CD8-positive, alpha-beta T cell (primary cell): ENCODE measurements at regions of chr4 and their contacts with region 1.

Region 1: DNA sequence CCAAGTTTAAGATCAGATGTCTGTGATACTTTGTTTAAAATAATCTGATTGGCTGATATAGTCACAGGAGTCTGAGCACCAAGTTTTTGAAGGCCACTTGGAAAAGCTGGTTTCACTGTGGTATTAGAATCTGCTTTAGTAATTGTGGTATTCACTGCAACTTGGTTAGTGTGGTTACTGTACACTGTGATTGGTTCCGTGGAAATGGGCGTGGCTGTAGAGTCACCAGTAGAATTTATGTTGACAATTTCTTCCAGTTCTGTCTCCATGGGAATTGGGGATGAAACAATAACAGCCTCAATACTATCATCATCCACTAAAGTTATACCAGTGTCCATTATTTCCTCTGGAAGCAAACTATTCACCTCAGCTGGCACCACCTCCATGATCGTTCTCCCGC is 26.2 kb downstream of the LIN54 start:
- DNase-seq: no peak
- ATAC-seq: no peak
- H3K4me3 ChIP-seq: no peak overlapping the region
- H3K4me3 Mint-ChIP-seq: no peak overlapping the region
- H3K27ac ChIP-seq: no peak overlapping the region
- H3K27ac Mint-ChIP-seq: no peak overlapping the region
- H3K4me1 ChIP-seq: peaks cover 5% of the 10 kb centered on the region
- H3K4me1 Mint-ChIP-seq: peaks cover 15% of the 10 kb centered on the region
- H3K27me3 ChIP-seq: no peaks in the 10 kb centered on the region
- H3K27me3 Mint-ChIP-seq: no peaks in the 10 kb centered on the region
- CTCF ChIP-seq: no peak

Region 2: GRCh38 chr4:81631958-81632441 is 1352.5 kb before region 1 on chr4:
- CTCF ChIA-PET with region 1: no interaction called
- POLR2A ChIA-PET with region 1: no interaction called
- intact Hi-C with region 1: no loop called
- DNase-seq: no peak
- ATAC-seq: no peak
- H3K4me3 ChIP-seq: no peak overlapping the region
- H3K4me3 Mint-ChIP-seq: no peak overlapping the region
- H3K27ac ChIP-seq: no peak overlapping the region
- H3K27ac Mint-ChIP-seq: no peak overlapping the region
- H3K4me1 ChIP-seq: no peaks in the 10 kb centered on the region
- H3K4me1 Mint-ChIP-seq: no peaks in the 10 kb centered on the region
- H3K27me3 ChIP-seq: no peaks in the 10 kb centered on the region
- H3K27me3 Mint-ChIP-seq: no peaks in the 10 kb centered on the region
- CTCF ChIP-seq: no peak

Region 3: GRCh38 chr4:82667761-82668505 is 316.5 kb before region 1 on chr4:
- CTCF ChIA-PET with region 1: no interaction called
- POLR2A ChIA-PET with region 1: no interaction called
- intact Hi-C with region 1: no loop called
- DNase-seq: no peak
- ATAC-seq: no peak
- H3K4me3 ChIP-seq: no peak overlapping the region
- H3K4me3 Mint-ChIP-seq: no peak overlapping the region
- H3K27ac ChIP-seq: no peak overlapping the region
- H3K27ac Mint-ChIP-seq: no peak overlapping the region
- H3K4me1 ChIP-seq: no peaks in the 10 kb centered on the region
- H3K4me1 Mint-ChIP-seq: no peaks in the 10 kb centered on the region
- H3K27me3 ChIP-seq: no peaks in the 10 kb centered on the region
- H3K27me3 Mint-ChIP-seq: peaks cover 7% of the 10 kb centered on the region
- CTCF ChIP-seq: no peak

Region 4: DNA sequence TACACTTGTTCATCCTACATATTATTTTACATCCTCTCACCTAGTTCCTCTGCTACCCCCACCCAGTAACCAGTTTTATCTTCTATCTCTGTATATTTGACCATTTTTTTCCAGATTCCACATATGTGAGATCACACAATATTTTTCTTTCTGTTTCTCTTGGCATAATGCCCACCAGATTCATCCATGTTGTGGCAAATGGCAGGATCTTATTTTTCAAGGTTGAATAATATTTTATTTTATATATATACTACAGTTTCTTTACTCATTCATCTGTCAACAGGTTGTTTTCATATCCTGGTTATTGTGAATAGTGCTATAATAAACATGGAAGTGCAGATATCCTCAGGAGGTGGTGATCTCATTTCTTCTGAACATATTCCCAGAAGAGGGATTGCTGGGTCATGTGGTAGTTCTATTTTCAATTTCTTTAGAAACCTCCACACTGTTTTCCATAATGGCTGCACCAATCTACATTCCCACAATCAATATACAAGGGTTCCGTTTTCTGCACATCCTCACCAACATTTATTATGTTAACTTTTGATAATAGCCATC is 35.7 kb before region 1 on chr4:
- CTCF ChIA-PET with region 1: no interaction called
- POLR2A ChIA-PET with region 1: no interaction called
- intact Hi-C with region 1: loop called in 1 of 2 experiments (anchors 5 kb)
- DNase-seq: no peak
- ATAC-seq: no peak
- H3K4me3 ChIP-seq: no peak overlapping the region
- H3K4me3 Mint-ChIP-seq: no peak overlapping the region
- H3K27ac ChIP-seq: no peak overlapping the region
- H3K27ac Mint-ChIP-seq: no peak overlapping the region
- H3K4me1 ChIP-seq: no peaks in the 10 kb centered on the region
- H3K4me1 Mint-ChIP-seq: peaks cover 2% of the 10 kb centered on the region
- H3K27me3 ChIP-seq: no peaks in the 10 kb centered on the region
- H3K27me3 Mint-ChIP-seq: no peaks in the 10 kb centered on the region
- CTCF ChIP-seq: no peak

Region 5: DNA sequence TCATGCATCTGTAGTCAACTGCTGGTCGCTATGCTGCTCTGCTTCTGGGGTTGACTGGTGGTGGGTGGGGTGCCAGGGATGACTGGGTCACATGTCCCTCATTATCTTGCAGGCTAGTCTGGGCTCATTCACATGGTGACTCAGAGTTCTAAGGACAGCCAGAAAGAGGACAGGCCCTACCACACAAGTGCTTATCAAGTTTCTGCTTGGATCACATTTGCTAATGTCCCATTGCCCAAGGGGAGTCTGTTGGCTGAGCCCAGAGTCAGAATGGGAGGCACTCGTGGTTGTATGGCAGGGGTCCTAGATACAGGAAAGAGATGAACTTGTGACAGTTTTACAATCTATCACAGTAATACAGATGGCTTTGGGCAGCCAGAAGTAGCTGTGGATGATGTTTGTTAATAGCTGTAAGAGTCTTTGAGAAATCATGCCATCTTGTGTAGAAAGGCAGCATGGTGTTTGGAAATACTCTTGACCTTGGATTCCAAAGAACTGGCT is 772.7 kb after region 1 on chr4:
- CTCF ChIA-PET with region 1: no interaction called
- POLR2A ChIA-PET with region 1: no interaction called
- intact Hi-C with region 1: no loop called
- DNase-seq: no peak
- ATAC-seq: no peak
- H3K4me3 ChIP-seq: no peak overlapping the region
- H3K4me3 Mint-ChIP-seq: no peak overlapping the region
- H3K27ac ChIP-seq: no peak overlapping the region
- H3K27ac Mint-ChIP-seq: no peak overlapping the region
- H3K4me1 ChIP-seq: no peaks in the 10 kb centered on the region
- H3K4me1 Mint-ChIP-seq: no peaks in the 10 kb centered on the region
- H3K27me3 ChIP-seq: no peaks in the 10 kb centered on the region
- H3K27me3 Mint-ChIP-seq: peaks cover 3% of the 10 kb centered on the region
- CTCF ChIP-seq: no peak

Region 6: DNA sequence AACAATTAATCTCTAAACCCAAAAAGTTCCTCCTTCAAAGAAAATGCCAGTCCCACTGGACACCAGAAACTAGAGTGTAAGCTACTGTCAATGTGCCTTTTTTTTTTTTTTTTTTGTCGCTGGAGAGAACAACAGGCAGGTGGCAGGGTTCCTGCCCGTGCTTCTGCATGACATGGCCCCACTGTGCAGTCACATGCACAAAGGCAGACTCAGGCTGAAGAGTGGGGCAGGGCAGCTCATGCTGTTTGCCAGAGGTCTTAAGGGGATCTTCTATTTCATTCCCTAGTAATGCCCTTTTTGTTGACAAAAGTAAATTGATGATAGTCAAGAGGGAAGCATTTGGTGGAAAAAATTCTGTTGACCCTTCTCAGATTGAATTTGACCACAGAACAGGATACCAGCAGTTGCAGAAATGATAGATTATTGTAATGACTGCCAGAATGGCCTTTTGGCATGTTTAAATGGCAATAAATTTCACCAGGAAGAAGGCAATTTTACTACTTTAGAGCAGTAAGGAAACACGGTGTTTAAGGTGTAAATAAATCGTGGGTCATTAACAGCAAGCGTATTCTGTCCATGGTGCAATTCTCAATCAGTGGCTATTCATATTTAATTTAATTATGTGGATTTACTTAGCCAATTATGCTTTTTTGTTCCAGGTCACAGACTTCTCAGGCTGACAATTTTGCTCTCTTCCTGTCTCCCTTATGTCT is 1433.7 kb after region 1 on chr4:
- CTCF ChIA-PET with region 1: no interaction called
- POLR2A ChIA-PET with region 1: no interaction called
- intact Hi-C with region 1: no loop called
- DNase-seq: no peak
- ATAC-seq: no peak
- H3K4me3 ChIP-seq: no peak overlapping the region
- H3K4me3 Mint-ChIP-seq: no peak overlapping the region
- H3K27ac ChIP-seq: no peak overlapping the region
- H3K27ac Mint-ChIP-seq: no peak overlapping the region
- H3K4me1 ChIP-seq: no peaks in the 10 kb centered on the region
- H3K4me1 Mint-ChIP-seq: no peaks in the 10 kb centered on the region
- H3K27me3 ChIP-seq: no peaks in the 10 kb centered on the region
- H3K27me3 Mint-ChIP-seq: peaks cover 2% of the 10 kb centered on the region
- CTCF ChIP-seq: no peak